Naive thymus-derived CD8-positive, alpha-beta T cell (primary cell): ENCODE measurements at regions of chr19 and their contacts with region 1.

Region 1: GRCh38 chr19:18007044-18007916 is 690 bp upstream of the ARRDC2 start:
- DNase-seq: peak; percentile 67 to 87 (median 82)
- ATAC-seq: peak; percentile 60 to 61
- H3K4me3 Mint-ChIP-seq: peak overlapping the region; percentile 84 to 98 (median 93)
- H3K27ac Mint-ChIP-seq: peak overlapping the region; percentile 68 to 99 (median 96)
- H3K4me1 Mint-ChIP-seq: peaks cover 13 to 52% (median 34%) of the 10 kb centered on the region in 4 donors
- H3K27me3 Mint-ChIP-seq: no peaks in the 10 kb centered on the region

Region 2: GRCh38 chr19:18021121-18021755 is 14.0 kb after region 1 on chr19:
- POLR2A ChIA-PET with region 1: interaction called, 214 read pairs
- DNase-seq: peak; percentile 50 to 89 (median 65)
- ATAC-seq: peak; percentile 43 to 67
- H3K4me3 Mint-ChIP-seq: peak overlapping the region; percentile 22 to 82 (median 74)
- H3K27ac Mint-ChIP-seq: peak overlapping the region; percentile 91 to 99 (median 98)
- H3K4me1 Mint-ChIP-seq: peaks cover 42 to 79% (median 73%) of the 10 kb centered on the region in 4 donors
- H3K27me3 Mint-ChIP-seq: peaks cover 0 to 1% (median 0%) of the 10 kb centered on the region in 5 donors